Motor neuron (in vitro differentiated cells): ENCODE measurements at regions of chr4 and their contacts with region 1.

Region 1: DNA sequence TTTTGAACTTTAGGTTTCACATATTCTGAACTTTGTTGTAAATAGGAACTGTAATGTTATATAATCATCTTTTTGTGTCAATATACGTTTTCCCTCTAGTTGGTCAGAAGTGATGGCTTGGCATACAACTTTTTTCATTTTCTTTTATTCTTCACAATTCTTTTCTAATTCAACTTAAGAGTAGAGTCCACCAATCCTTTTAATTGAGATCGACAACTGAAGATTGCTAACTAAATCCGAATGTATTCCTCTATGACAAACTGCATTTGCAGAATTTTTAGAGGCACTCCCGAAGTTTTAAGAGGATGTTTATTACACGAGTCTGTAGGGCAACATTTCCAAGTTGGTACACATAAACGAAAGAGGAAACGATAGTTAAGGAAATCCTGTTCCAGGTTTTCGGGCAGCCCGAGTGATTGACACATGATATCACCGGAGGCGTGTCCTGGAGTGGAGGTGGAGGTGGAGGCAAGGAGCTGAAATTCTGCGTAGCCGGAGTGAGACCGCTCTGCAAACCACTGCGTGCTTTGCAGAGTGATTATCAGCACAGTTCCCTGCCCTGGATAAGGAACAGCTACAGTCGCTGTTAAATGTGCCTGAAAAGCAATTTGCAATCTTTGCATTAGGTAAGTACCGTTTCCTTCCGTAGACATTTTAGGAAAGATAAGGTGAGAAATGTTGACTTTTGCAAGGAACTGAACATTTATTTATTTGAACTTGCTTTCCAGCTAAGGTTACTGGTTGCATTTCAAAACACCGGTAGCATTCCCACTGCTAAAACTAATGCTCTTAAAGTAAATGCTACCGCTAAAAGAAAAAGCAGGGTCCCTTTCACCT is at the start of gene SPRY1:
- ATAC-seq: peak; percentile 31 to 56 (median 45)
- H3K4me3 ChIP-seq: peak within 1 kb of the TSS; percentile 57 to 94 (median 69)
- H3K27ac ChIP-seq: peak within 1 kb of the TSS in 1 of 2 donors; percentile 88
- H3K4me1 ChIP-seq: peaks cover 0 to 5% of the 10 kb centered on the region in 2 donors
- total RNA-seq, gene SPRY1: 3.0 to 28.7 (median 4.9) TPM

Region 2: GRCh38 chr4:123127218-123127617 is 269.3 kb before region 1 on chr4:
- in situ Hi-C with region 1: loop called in 3 of 9 experiments (anchors 25 kb)
- ATAC-seq: peak in 1 of 8 experiments; percentile 41
- H3K4me3 ChIP-seq: no peak overlapping the region
- H3K27ac ChIP-seq: no peak overlapping the region
- H3K4me1 ChIP-seq: no peaks in the 10 kb centered on the region

Region 3: GRCh38 chr4:123649645-123650391 is 253.3 kb after region 1 on chr4:
- in situ Hi-C with region 1: loop called in 3 of 9 experiments (anchors 25 kb)
- ATAC-seq: peak; percentile 76 to 94 (median 90)
- H3K4me3 ChIP-seq: peak overlapping the region in 2 of 5 donors; percentile 4 to 7
- H3K27ac ChIP-seq: peak overlapping the region in 1 of 2 donors; percentile 71
- H3K4me1 ChIP-seq: peaks cover 13 to 18% of the 10 kb centered on the region in 2 donors

Region 4: DNA sequence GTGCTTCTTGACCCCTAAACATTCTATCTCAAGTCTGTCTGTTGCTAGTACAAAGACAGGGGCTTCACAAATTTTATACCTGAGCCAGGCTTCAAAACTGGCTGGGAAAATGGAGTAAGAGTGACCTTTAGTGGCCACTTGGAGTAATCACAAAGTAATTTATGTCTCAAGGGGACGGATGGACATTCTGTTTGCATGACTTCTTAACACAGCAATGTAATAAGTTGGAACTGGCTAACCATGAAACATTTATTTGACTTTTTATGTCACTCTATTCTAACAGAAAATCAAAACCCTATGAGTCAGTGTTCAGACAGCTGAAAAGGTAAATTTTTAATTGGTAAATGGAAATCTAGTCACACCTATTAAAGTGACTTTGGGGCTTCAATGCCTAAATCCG is 715.4 kb after region 1 on chr4:
- in situ Hi-C with region 1: loop called in 1 of 9 experiments (anchors 25 kb)
- ATAC-seq: peak; percentile 54 to 78 (median 62)
- H3K4me3 ChIP-seq: no peak overlapping the region
- H3K27ac ChIP-seq: no peak overlapping the region
- H3K4me1 ChIP-seq: no peaks in the 10 kb centered on the region

Region 5: GRCh38 chr4:124262211-124263179 is 866.0 kb after region 1 on chr4:
- in situ Hi-C with region 1: loop called in 1 of 9 experiments (anchors 25 kb)
- ATAC-seq: peak; percentile 75 to 98 (median 83)
- H3K4me3 ChIP-seq: no peak overlapping the region
- H3K27ac ChIP-seq: no peak overlapping the region
- H3K4me1 ChIP-seq: no peaks in the 10 kb centered on the region